Heart right ventricle (tissue), 16 donors: ENCODE measurements at regions of chr1 and their contacts with region 1.

Region 1: GRCh38 chr1:208245185-208245705 is 1.1 kb upstream of the PLXNA2 start:
- DNase-seq: peak; percentile 84 to 94
- ATAC-seq: peak; percentile 72 to 92 (median 82)
- H3K4me3 ChIP-seq: peak overlapping the region in 9 of 10 donors; percentile 74 to 98 (median 84)
- H3K27ac ChIP-seq: peak overlapping the region; percentile 84 to 98 (median 92)
- H3K4me1 ChIP-seq: peaks cover 0 to 52% (median 33%) of the 10 kb centered on the region in 9 donors
- H3K27me3 ChIP-seq: peaks cover 0 to 33% (median 0%) of the 10 kb centered on the region in 7 donors
- CTCF ChIP-seq: peak; percentile 75 to 91 (median 84)

Region 2: DNA sequence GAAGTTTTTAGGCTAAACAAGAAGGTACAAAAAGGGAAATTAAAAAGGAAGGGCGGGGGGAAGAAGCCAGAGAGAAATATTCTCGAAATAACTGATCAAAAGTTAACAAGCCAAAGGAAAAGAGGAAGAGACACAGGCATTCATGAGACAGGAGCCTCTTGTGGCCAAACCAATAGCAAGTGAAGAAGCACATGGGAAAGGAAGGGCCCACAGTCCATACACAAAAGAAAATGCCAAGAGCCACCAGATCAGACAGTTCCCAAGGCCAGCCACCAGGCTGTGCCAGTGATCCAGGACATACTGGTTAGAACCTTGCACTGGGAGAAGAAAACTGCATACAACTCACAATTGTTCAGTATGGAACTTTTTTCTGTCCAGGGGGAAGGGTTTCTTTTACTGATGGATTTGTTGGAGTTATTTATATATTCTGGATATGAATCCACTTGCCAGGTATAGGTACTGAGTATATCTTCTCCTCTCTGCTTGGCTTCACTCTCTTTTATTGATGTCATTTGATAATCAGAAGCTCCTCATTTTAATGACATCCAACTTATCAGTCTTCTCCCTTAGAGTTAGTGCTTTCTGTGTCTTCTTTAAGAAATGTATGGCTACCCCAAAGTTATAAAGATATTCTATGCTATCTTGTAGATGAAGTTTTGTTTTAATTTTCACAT is 416.6 kb before region 1 on chr1:
- intact Hi-C with region 1: loop called in 1 of 10 experiments (anchors 10 kb)
- DNase-seq: peak; percentile 73 to 84
- ATAC-seq: peak; percentile 31 to 65 (median 56)
- H3K4me3 ChIP-seq: no peak overlapping the region
- H3K27ac ChIP-seq: peak overlapping the region; percentile 10 to 100 (median 94)
- H3K4me1 ChIP-seq: peaks cover 38 to 98% (median 89%) of the 10 kb centered on the region in 9 donors
- H3K27me3 ChIP-seq: no peaks in the 10 kb centered on the region
- CTCF ChIP-seq: peak; percentile 82 to 96 (median 90)

Region 3: GRCh38 chr1:208024406-208024805 is 220.8 kb before region 1 on chr1:
- intact Hi-C with region 1: loop called (anchors 1 to 5 kb)
- DNase-seq: no peak
- ATAC-seq: no peak
- H3K4me3 ChIP-seq: no peak overlapping the region
- H3K27ac ChIP-seq: no peak overlapping the region
- H3K4me1 ChIP-seq: peaks cover 0 to 27% (median 7%) of the 10 kb centered on the region in 9 donors
- H3K27me3 ChIP-seq: no peaks in the 10 kb centered on the region
- CTCF ChIP-seq: no peak

Region 4: GRCh38 chr1:208085655-208086515 is 159.4 kb before region 1 on chr1:
- intact Hi-C with region 1: loop called in 3 of 10 experiments (anchors 2 to 5 kb)
- DNase-seq: no peak
- ATAC-seq: no peak
- H3K4me3 ChIP-seq: peak overlapping the region in 6 of 10 donors; percentile 4 to 38 (median 22)
- H3K27ac ChIP-seq: peak overlapping the region in 5 of 10 donors; percentile 19 to 68 (median 54)
- H3K4me1 ChIP-seq: peaks cover 2 to 69% (median 33%) of the 10 kb centered on the region in 9 donors
- H3K27me3 ChIP-seq: no peaks in the 10 kb centered on the region
- CTCF ChIP-seq: no peak

Region 5: DNA sequence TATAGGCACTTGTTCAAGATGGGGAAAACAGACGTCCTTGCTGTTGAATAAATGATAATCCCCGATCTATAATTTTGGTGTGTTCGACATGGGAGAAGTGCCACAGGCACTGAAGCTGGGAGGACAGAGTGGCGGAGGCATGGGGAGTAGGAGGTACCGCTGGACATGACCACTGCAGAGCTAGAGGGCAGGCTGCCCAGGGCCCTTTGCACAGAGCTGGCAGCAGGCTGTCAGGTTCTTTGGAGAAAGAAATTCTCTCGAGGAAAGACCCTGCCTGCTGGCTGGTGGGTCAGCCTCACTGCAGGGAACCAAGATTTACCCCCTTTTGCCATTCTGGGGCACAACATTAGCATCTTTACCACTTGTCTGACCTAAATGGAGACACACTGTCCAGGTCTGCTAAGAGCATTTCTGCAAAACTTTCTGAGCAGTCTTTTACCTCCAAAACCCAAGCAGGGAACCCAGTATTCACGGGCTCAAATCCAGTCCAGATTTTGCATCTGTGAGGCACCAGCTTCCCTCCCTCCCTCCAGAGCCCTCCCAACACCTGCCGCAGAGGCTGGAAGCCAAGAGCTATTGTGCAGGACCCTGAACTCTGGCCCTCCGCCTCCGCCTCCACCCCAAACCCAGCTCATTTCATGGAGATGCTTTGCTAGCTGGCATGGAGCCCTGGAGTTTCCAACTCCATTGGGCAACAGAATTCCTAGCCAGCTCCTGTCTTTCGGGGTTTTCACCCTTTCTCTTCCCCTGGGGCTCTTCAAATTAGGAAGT is 143.4 kb before region 1 on chr1:
- intact Hi-C with region 1: loop called in 1 of 10 experiments (anchors 10 kb)
- DNase-seq: peak in 1 of 2 donors; percentile 39
- ATAC-seq: peak in 6 of 8 donors; percentile 54 to 77 (median 61)
- H3K4me3 ChIP-seq: no peak overlapping the region
- H3K27ac ChIP-seq: peak overlapping the region in 2 of 10 donors; percentile 25 to 39
- H3K4me1 ChIP-seq: peaks cover 0 to 45% (median 16%) of the 10 kb centered on the region in 9 donors
- H3K27me3 ChIP-seq: no peaks in the 10 kb centered on the region
- CTCF ChIP-seq: no peak

Region 6: GRCh38 chr1:208207388-208208131 is 37.7 kb before region 1 on chr1:
- intact Hi-C with region 1: loop called in 1 of 10 experiments (anchors 5 kb)
- DNase-seq: peak; percentile 40 to 75
- ATAC-seq: peak; percentile 50 to 86 (median 80)
- H3K4me3 ChIP-seq: no peak overlapping the region
- H3K27ac ChIP-seq: peak overlapping the region; percentile 52 to 89 (median 76)
- H3K4me1 ChIP-seq: peaks cover 22 to 92% (median 74%) of the 10 kb centered on the region in 9 donors
- H3K27me3 ChIP-seq: no peaks in the 10 kb centered on the region
- CTCF ChIP-seq: no peak